Left cardiac atrium (tissue), 4 donors: ENCODE measurements at regions of chrX and their contacts with region 1.

Region 1: DNA sequence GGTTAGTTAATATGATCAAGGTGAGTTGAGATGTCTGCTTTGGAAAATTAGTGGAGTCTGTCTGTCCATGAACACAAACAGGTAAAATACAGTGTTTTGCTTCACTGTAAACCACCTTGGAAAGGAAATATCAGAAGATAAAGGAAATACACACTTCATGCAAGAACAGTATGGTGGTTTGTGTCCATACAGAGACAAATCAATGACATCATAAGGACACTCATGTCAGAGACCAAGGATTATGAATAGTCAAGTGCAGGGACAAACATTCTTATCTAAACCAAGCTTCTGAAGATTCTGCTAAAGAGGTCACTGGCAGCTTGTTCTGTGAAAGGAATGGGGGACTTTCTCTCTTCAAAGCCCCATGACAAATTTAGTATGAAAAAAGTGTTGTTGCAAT is 322.9 kb upstream of the F9 start:
- DNase-seq: no peak
- ATAC-seq: no peak

Region 2: GRCh38 chrX:139224953-139225665 is 17.5 kb after region 1 on chrX:
- intact Hi-C with region 1: loop called in 1 of 2 experiments (anchors 2 kb)
- DNase-seq: no peak
- ATAC-seq: no peak